ENCODE measurements at regions of chr1 and their contacts with region 1.

Region 1: GRCh38 chr1:193325771-193326170 is 139.4 kb upstream of the B3GALT2 start:
- DNase-seq: no peak
- H3K4me3 ChIP-seq: no peak overlapping the region
- H3K27ac ChIP-seq: no peak overlapping the region
- H3K4me1 ChIP-seq: no peaks in the 10 kb centered on the region
- H3K27me3 ChIP-seq: no peaks in the 10 kb centered on the region
- CTCF ChIP-seq: no peak

Region 2: DNA sequence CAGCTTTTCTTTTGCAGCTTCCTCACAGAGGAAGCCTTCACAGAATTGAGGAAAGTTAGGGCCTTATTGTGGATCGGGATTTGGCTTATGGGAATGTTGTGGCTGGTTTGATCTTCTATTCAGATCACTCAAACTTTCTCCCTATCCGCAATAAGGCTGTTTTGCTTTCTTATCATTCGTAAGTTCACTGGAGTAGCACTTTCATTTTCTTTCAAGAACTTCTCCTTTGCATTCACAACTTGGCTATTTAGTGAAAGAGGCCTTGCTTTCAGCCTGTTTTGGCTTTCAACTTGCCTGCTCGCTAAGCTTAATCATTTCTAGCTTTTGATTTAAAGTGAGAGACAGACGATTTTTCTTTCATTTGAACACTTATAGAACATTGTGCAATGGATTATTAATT is 42.5 kb after region 1 on chr1:
- intact Hi-C with region 1: loop called (anchors 2 kb)
- DNase-seq: no peak
- H3K4me3 ChIP-seq: no peak overlapping the region
- H3K27ac ChIP-seq: no peak overlapping the region
- H3K4me1 ChIP-seq: no peaks in the 10 kb centered on the region
- H3K27me3 ChIP-seq: no peaks in the 10 kb centered on the region
- CTCF ChIP-seq: no peak

Measured in tibial artery (tissue), 4 donors.